ENCODE measurements at regions of chr3 and their contacts with region 1.

Region 1: GRCh38 chr3:31981206-31982181 is at the starts of genes OSBPL10 and ZNF860:
- DNase-seq: peak; percentile 94
- H3K4me3 ChIP-seq: peak within 1 kb of the TSS; percentile 49 to 89 (median 75)
- H3K27ac ChIP-seq: peak within 1 kb of the TSS; percentile 88
- H3K4me1 ChIP-seq: peaks cover 26% of the 10 kb centered on the region
- H3K27me3 ChIP-seq: no peaks in the 10 kb centered on the region
- CTCF ChIP-seq: peak in 1 of 2 donors; percentile 26
- total RNA-seq, gene OSBPL10: 68.1 to 68.7 TPM
- total RNA-seq, gene ZNF860: 3.4 to 4.0 TPM

Region 2: GRCh38 chr3:31610700-31611275 is 370.7 kb before region 1 on chr3:
- CTCF ChIA-PET with region 1: no interaction called
- dilution Hi-C with region 1: no loop called
- in situ Hi-C with region 1: no loop called
- intact Hi-C with region 1: loop called (anchors 2 kb)
- DNase-seq: peak; percentile 36
- H3K4me3 ChIP-seq: no peak overlapping the region
- H3K27ac ChIP-seq: no peak overlapping the region
- H3K4me1 ChIP-seq: peaks cover 4% of the 10 kb centered on the region
- H3K27me3 ChIP-seq: no peaks in the 10 kb centered on the region
- CTCF ChIP-seq: peak; percentile 48 to 64

Region 3: DNA sequence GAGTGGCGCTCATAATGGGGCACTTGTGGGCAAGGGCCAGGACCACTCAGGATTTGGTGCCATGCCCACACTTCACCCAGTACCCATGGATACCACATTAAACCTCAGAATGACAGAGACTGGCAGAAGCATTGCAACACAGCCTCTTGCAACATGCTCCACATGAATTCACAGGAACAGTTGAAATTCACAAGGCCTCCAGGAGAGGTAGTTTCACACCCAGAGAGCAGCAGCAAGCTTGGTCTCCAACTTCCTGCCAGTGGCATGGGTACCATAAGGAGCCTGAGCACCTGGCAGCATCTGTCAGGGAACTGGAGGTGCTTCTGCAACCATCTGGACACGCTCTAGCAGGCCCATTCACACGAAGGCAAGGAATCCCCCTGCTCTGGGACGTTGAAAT is 101.5 kb before region 1 on chr3:
- CTCF ChIA-PET with region 1: interaction called, 6 read pairs
- dilution Hi-C with region 1: no loop called
- in situ Hi-C with region 1: no loop called
- intact Hi-C with region 1: loop called (anchors 1 kb)
- DNase-seq: peak; percentile 79
- H3K4me3 ChIP-seq: no peak overlapping the region
- H3K27ac ChIP-seq: peak overlapping the region; percentile 38
- H3K4me1 ChIP-seq: peaks cover 55% of the 10 kb centered on the region
- H3K27me3 ChIP-seq: no peaks in the 10 kb centered on the region
- CTCF ChIP-seq: peak; percentile 36 to 64

Region 4: DNA sequence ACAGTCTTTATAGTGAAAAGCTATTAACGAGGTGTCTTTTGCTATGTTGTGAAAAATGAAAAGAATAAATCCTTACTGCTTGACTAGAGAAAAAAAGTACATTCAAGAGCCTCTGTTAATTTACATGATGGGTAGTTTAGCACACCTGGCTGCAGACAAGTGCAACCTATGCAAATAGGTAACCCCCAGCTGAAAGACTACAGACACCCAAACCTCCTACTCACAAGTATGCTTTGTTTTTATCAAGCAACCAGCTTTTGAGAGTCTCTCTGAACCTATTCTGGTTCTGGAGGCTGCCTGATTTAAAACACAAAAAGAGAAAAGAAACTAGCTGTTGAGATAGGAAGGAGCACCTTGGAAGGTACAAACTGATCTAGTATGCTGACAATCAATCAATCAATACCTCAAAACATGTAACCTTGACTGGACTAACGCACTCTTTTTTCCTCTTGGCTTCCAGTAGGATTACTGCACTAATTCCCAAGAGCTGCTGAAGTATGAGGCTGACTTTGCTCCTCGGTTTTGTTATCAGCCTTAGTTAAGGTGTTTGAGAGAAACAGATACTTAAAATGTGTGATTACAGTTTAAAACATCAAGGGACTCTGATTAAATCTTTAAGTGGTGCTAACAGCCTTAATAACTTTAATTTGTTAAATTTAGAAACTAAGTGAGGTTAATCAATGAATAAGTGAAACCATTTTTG is 64.0 kb before region 1 on chr3:
- CTCF ChIA-PET with region 1: no interaction called
- dilution Hi-C with region 1: loop called (anchors 5 kb)
- in situ Hi-C with region 1: no loop called
- intact Hi-C with region 1: loop called (anchors 1 kb)
- DNase-seq: no peak
- H3K4me3 ChIP-seq: no peak overlapping the region
- H3K27ac ChIP-seq: no peak overlapping the region
- H3K4me1 ChIP-seq: peaks cover 18% of the 10 kb centered on the region
- H3K27me3 ChIP-seq: no peaks in the 10 kb centered on the region
- CTCF ChIP-seq: no peak

Region 5: GRCh38 chr3:31968927-31969418 is 12.5 kb before region 1 on chr3:
- CTCF ChIA-PET with region 1: no interaction called
- dilution Hi-C with region 1: no loop called
- in situ Hi-C with region 1: no loop called
- intact Hi-C with region 1: loop called (anchors 1 kb)
- DNase-seq: peak; percentile 97
- H3K4me3 ChIP-seq: peak overlapping the region in 2 of 3 experiments; percentile 21 to 29
- H3K27ac ChIP-seq: peak overlapping the region; percentile 99
- H3K4me1 ChIP-seq: peaks cover 38% of the 10 kb centered on the region
- H3K27me3 ChIP-seq: no peaks in the 10 kb centered on the region
- CTCF ChIP-seq: no peak